Posterior vena cava (tissue), 2 donors: ENCODE measurements at regions of chr7 and their contacts with region 1.

Region 1: DNA sequence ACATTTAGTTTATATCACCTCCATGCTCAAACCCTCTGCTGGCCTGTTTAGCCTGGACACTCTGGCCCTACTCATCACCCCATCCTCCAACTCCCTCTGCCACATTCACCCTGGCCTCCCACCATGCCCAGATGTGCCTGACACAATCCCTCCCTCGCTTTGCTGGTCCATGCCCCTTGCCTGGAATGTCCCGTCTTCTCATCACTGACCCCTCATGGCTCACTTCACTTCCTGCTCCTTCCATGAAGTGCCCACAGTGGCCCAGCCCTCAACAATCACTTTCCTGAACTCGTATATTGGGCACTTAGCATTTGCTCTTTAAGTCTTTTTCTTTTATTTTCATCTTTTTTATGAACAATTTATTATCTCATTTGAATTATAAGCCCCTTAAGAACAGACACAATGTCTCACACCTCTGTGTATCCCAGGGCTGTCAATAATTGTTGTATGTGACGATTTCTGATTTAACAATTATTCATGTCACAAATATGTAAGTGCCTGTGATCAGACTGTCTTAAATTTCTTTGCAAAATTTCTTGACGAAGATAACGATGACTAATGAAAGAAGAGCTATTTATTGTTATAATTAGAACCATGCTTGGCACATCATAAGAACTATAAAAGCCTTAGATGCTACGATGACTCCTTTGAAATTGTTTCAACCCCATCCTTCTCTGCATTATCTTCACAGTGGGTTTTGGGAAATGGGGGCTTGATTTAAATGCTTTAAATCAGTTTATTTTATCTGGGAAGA is 209.9 kb upstream of the YAE1 start:
- DNase-seq: no peak

Region 2: DNA sequence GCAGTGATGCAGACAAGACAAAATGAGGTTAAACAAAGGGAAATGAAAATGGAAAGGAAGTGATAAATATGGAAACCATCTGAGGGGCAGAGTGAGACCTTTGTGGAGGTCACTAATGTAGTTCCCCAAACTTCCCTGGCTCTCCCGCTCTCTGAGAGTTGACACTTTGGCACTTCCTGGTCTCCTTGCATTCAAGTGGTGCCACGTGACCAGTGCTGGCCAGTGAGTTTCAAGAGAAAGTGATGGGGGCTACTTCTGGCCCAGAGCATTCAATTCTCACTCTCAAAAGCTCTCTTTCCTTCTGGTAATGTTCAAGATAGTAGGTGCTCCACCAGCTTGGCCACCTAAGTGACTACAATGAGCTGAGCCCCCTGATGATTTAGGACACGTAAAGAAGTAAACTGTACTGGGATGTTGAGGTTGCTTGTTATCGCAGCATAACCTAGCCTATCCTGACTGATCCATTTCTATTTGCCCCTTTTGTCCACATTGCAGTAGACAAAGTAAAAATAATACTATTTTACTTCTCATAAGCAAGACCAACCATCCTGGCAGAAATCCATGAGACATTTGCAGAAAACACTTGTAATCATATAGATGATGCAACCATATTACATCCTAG is 32.1 kb before region 1 on chr7:
- intact Hi-C with region 1: loop called in 1 of 2 experiments (anchors 1 kb)
- DNase-seq: no peak

Region 3: DNA sequence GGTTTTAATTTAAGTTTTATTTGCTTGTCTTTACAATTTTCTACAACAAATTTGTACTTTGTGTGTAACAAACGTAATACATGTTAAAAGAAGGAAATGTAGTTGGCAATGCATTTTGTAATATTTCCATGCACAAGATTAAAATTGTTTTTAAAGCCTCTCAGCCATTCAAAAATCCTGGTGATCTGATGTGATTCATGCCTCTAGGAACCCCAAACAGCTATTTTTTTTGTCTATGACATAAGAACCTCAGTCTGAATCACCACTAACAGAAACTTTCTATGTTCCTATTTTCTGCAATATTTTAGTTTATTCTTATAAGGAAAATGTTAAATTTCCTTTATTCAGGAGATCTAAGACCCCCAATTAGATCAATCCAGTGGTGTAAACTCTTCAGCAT is 26.8 kb after region 1 on chr7:
- intact Hi-C with region 1: no loop called
- DNase-seq: no peak